Mammary epithelial cell (primary cell): ENCODE measurements at regions of chr9 and their contacts with region 1.

Region 1: GRCh38 chr9:81529556-81530195 is 159.7 kb downstream of the TLE1 start:
- DNase-seq: peak; percentile 84
- H3K4me3 ChIP-seq: no peak overlapping the region
- H3K27ac ChIP-seq: no peak overlapping the region
- H3K4me1 ChIP-seq: peaks cover 11% of the 10 kb centered on the region
- H3K27me3 ChIP-seq: no peaks in the 10 kb centered on the region
- CTCF ChIP-seq: no peak

Region 2: GRCh38 chr9:81326549-81326948 is 203.1 kb before region 1 on chr9:
- CTCF ChIA-PET with region 1: no interaction called
- dilution Hi-C with region 1: no loop called
- in situ Hi-C with region 1: no loop called
- intact Hi-C with region 1: no loop called
- DNase-seq: no peak
- H3K4me3 ChIP-seq: no peak overlapping the region
- H3K27ac ChIP-seq: no peak overlapping the region
- H3K4me1 ChIP-seq: no peaks in the 10 kb centered on the region
- H3K27me3 ChIP-seq: no peaks in the 10 kb centered on the region
- CTCF ChIP-seq: no peak

Region 3: DNA sequence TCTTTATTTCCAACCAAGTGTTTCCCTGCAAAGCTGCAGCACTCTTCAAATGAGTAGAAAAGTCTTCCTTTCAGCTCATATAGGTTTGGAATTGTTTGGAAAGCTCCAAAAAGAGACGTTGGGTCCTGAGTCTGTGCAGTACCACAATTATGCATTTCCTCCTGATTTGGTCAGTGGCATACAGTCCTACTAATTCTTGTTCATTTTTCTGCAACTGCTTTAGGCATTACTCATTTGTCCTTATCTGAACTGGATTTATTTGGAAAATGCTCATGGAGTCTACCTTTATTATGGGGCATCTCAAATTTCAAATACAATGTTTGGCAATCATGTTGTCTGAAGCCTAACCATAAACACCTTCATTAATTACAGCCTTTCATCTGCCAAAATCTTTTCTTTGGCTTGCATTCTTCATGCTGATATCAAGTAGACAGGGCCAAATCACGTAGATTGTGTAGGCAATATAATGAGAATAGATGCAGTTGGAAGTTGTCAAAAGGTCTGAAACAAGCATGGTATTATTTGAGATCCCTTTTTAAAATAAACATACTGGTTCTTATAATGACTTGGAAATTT is 73.2 kb before region 1 on chr9:
- CTCF ChIA-PET with region 1: no interaction called
- dilution Hi-C with region 1: no loop called
- in situ Hi-C with region 1: no loop called
- intact Hi-C with region 1: no loop called
- DNase-seq: no peak
- H3K4me3 ChIP-seq: no peak overlapping the region
- H3K27ac ChIP-seq: no peak overlapping the region
- H3K4me1 ChIP-seq: no peaks in the 10 kb centered on the region
- H3K27me3 ChIP-seq: peaks cover 2% of the 10 kb centered on the region
- CTCF ChIP-seq: no peak

Region 4: DNA sequence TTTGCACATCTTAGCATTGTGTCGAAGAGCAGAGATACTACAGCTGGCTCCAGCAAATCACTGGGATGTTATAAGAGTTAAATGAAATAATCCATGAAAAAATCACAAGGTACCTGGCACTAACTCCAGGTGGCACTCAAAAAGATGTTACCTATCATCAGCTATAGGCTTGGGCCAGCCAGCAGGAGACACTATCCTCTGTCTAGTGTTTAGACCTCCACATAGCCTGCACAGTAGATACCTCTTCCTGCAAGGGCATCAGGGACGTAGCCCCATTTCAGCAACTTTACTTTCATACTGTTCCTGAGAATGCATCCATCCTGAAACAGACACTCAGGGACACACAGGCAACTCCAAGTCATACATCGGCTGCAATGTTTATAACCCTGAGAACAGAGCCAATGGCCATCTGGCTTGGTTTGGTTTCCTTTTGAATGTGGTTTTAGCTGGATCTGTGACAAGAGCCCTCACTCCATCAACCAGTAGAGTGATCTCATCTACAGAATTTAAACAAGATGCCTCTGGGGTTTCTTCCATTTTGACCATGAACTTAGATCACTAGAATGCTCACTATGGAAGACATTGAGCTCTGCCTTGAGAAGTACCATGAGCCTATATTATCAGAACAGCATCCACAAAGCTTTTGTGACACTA is 89.8 kb after region 1 on chr9:
- CTCF ChIA-PET with region 1: no interaction called
- dilution Hi-C with region 1: no loop called
- in situ Hi-C with region 1: no loop called
- intact Hi-C with region 1: loop called (anchors 10 kb)
- DNase-seq: no peak
- H3K4me3 ChIP-seq: no peak overlapping the region
- H3K27ac ChIP-seq: no peak overlapping the region
- H3K4me1 ChIP-seq: no peaks in the 10 kb centered on the region
- H3K27me3 ChIP-seq: no peaks in the 10 kb centered on the region
- CTCF ChIP-seq: no peak

Region 5: GRCh38 chr9:81848472-81848871 is 318.8 kb after region 1 on chr9:
- CTCF ChIA-PET with region 1: no interaction called
- dilution Hi-C with region 1: no loop called
- in situ Hi-C with region 1: loop called in 1 of 2 experiments (anchors 10 kb)
- intact Hi-C with region 1: no loop called
- DNase-seq: peak; percentile 32
- H3K4me3 ChIP-seq: no peak overlapping the region
- H3K27ac ChIP-seq: no peak overlapping the region
- H3K4me1 ChIP-seq: no peaks in the 10 kb centered on the region
- H3K27me3 ChIP-seq: no peaks in the 10 kb centered on the region
- CTCF ChIP-seq: peak; percentile 31 to 53